Aorta (tissue), 5 donors: ENCODE measurements at regions of chr9 and their contacts with region 1.

Region 1: GRCh38 chr9:546797-547223 is 294.7 kb upstream of the DMRT1 start:
- DNase-seq: no peak
- ATAC-seq: peak; percentile 69
- H3K4me3 ChIP-seq: no peak overlapping the region
- H3K27ac ChIP-seq: peak overlapping the region in 1 of 2 donors; percentile 17
- H3K4me1 ChIP-seq: peaks cover 3 to 7% of the 10 kb centered on the region in 2 donors
- H3K27me3 ChIP-seq: no peaks in the 10 kb centered on the region

Region 2: DNA sequence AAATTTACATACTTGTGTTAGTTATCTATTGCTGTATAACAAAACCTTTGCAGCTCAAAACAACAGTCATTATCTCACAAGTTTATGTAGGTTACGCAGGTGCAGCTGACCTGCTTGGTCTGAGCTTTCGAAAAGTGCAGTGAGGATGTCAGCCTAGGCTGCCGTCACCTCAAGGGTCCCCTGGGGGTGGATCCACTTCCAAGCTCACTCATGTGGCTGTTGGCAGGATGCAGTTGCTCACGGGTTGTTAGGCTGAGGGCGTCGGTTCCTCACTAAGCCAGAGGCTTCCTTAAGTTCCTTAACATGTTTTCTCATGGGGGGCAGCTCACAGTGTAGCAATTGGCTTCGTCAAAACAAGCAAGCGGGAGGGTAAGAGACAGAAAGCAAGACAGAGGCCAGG is 192.4 kb before region 1 on chr9:
- intact Hi-C with region 1: no loop called
- DNase-seq: no peak
- ATAC-seq: no peak
- H3K4me3 ChIP-seq: no peak overlapping the region
- H3K27ac ChIP-seq: no peak overlapping the region
- H3K4me1 ChIP-seq: peaks cover 0 to 1% of the 10 kb centered on the region in 2 donors
- H3K27me3 ChIP-seq: no peaks in the 10 kb centered on the region

Region 3: GRCh38 chr9:371349-371748 is 175.5 kb before region 1 on chr9:
- intact Hi-C with region 1: loop called in 1 of 2 experiments (anchors 10 kb)
- DNase-seq: no peak
- ATAC-seq: no peak
- H3K4me3 ChIP-seq: no peak overlapping the region
- H3K27ac ChIP-seq: no peak overlapping the region
- H3K4me1 ChIP-seq: no peaks in the 10 kb centered on the region
- H3K27me3 ChIP-seq: no peaks in the 10 kb centered on the region

Region 4: GRCh38 chr9:394347-395052 is 152.3 kb before region 1 on chr9:
- intact Hi-C with region 1: loop called in 1 of 2 experiments (anchors 5 kb)
- DNase-seq: no peak
- ATAC-seq: peak; percentile 54
- H3K4me3 ChIP-seq: no peak overlapping the region
- H3K27ac ChIP-seq: no peak overlapping the region
- H3K4me1 ChIP-seq: no peaks in the 10 kb centered on the region
- H3K27me3 ChIP-seq: no peaks in the 10 kb centered on the region

Region 5: GRCh38 chr9:503881-504852 is 42.6 kb before region 1 on chr9:
- intact Hi-C with region 1: loop called (anchors 5 kb)
- DNase-seq: peak; percentile 77 to 92
- ATAC-seq: peak; percentile 88
- H3K4me3 ChIP-seq: peak within 1 kb of the TSS; percentile 89 to 90
- H3K27ac ChIP-seq: peak within 1 kb of the TSS; percentile 6 to 20
- H3K4me1 ChIP-seq: no peaks in the 10 kb centered on the region
- H3K27me3 ChIP-seq: no peaks in the 10 kb centered on the region

Region 6: GRCh38 chr9:763692-764524 is 217.1 kb after region 1 on chr9:
- intact Hi-C with region 1: loop called in 1 of 2 experiments (anchors 10 kb)
- DNase-seq: peak; percentile 77 to 80
- ATAC-seq: peak; percentile 95
- H3K4me3 ChIP-seq: no peak overlapping the region
- H3K27ac ChIP-seq: no peak overlapping the region
- H3K4me1 ChIP-seq: peaks cover 0 to 2% of the 10 kb centered on the region in 2 donors
- H3K27me3 ChIP-seq: no peaks in the 10 kb centered on the region